PC-9 (cell line): ENCODE measurements at regions of chr17 and their contacts with region 1.

Region 1: DNA sequence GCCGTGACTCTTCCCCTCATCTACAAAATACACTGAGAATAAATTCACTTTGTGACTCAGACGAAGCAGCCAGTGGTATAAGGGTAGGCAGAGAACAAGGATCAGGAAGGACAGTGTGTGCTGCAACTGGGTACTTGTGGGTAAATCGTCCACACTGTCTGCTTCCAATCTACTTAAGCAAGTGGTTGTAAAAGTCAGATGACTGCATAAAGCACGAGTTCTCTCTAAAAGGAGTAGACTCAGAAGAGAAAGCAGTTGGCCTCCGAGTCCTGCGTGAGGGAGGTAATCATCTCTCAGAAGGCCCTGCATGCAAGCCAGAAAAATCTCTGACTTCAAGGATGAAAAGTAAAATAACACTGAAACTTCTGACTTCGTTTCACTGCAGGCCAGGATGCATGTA is 43.1 kb downstream of the ANKFY1 start:
- DNase-seq: no peak
- H3K4me3 ChIP-seq: no peak overlapping the region
- H3K27ac ChIP-seq: no peak overlapping the region
- H3K4me1 ChIP-seq: no peaks in the 10 kb centered on the region
- H3K27me3 ChIP-seq: no peaks in the 10 kb centered on the region
- CTCF ChIP-seq: no peak

Region 2: GRCh38 chr17:4074831-4075495 is 145.7 kb before region 1 on chr17:
- CTCF ChIA-PET with region 1: no interaction called
- POLR2A ChIA-PET with region 1: no interaction called
- intact Hi-C with region 1: no loop called
- DNase-seq: peak; percentile 16 to 50
- H3K4me3 ChIP-seq: no peak overlapping the region
- H3K27ac ChIP-seq: no peak overlapping the region
- H3K4me1 ChIP-seq: peaks cover 13% of the 10 kb centered on the region
- H3K27me3 ChIP-seq: no peaks in the 10 kb centered on the region
- CTCF ChIP-seq: peak; percentile 85

Region 3: GRCh38 chr17:4256952-4257351 is 36.3 kb after region 1 on chr17:
- CTCF ChIA-PET with region 1: no interaction called
- POLR2A ChIA-PET with region 1: interaction called, 11 read pairs
- intact Hi-C with region 1: loop called (anchors 5 kb)
- DNase-seq: no peak
- H3K4me3 ChIP-seq: no peak overlapping the region
- H3K27ac ChIP-seq: no peak overlapping the region
- H3K4me1 ChIP-seq: no peaks in the 10 kb centered on the region
- H3K27me3 ChIP-seq: no peaks in the 10 kb centered on the region
- CTCF ChIP-seq: no peak

Region 4: GRCh38 chr17:4263282-4264215 is 42.9 kb after region 1 on chr17 and contains the start of gene ANKFY1:
- CTCF ChIA-PET with region 1: interaction called, 6 read pairs
- POLR2A ChIA-PET with region 1: no interaction called
- intact Hi-C with region 1: loop called (anchors 5 kb)
- DNase-seq: peak; percentile 85 to 98
- H3K4me3 ChIP-seq: peak within 1 kb of the TSS; percentile 64
- H3K27ac ChIP-seq: peak within 1 kb of the TSS; percentile 46
- H3K4me1 ChIP-seq: peaks cover 14% of the 10 kb centered on the region
- H3K27me3 ChIP-seq: no peaks in the 10 kb centered on the region
- CTCF ChIP-seq: no peak
- total RNA-seq, gene ANKFY1: 63.9 and 74.5 TPM in 2 replicates

Region 5: GRCh38 chr17:4304417-4305027 is 83.9 kb after region 1 on chr17:
- CTCF ChIA-PET with region 1: interaction called, 13 read pairs
- POLR2A ChIA-PET with region 1: no interaction called
- intact Hi-C with region 1: no loop called
- DNase-seq: peak in 1 of 2 experiments; percentile 11
- H3K4me3 ChIP-seq: no peak overlapping the region
- H3K27ac ChIP-seq: no peak overlapping the region
- H3K4me1 ChIP-seq: no peaks in the 10 kb centered on the region
- H3K27me3 ChIP-seq: no peaks in the 10 kb centered on the region
- CTCF ChIP-seq: peak; percentile 84

Region 6: GRCh38 chr17:4366327-4367063 is 145.8 kb after region 1 on chr17 and contains the start of gene UBE2G1:
- CTCF ChIA-PET with region 1: interaction called, 3 read pairs
- POLR2A ChIA-PET with region 1: no interaction called
- intact Hi-C with region 1: loop called (anchors 2 kb)
- DNase-seq: peak; percentile 88 to 98
- H3K4me3 ChIP-seq: peak within 1 kb of the TSS; percentile 72
- H3K27ac ChIP-seq: peak within 1 kb of the TSS; percentile 60
- H3K4me1 ChIP-seq: peaks cover 17% of the 10 kb centered on the region
- H3K27me3 ChIP-seq: no peaks in the 10 kb centered on the region
- CTCF ChIP-seq: peak; percentile 41
- total RNA-seq, gene UBE2G1: 104 and 111 TPM in 2 replicates

Region 7: DNA sequence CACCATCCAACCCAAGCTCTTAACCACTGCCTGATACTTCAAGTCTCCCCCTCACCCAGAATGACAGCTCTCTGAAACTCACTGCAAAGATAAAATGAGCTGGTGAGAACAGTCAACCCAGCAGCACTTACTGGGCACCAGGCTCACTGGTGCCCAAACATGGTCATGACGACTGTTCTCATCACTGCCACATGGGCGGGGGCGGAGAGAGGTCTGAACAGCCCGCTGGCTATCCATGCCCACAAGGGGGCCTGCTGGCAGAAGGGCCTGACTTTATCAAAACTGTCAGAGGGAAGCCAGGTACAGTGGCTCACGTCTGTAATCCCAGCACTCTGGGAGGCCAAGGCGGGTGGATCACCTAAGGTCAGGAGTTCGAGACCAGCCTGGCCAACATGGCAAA is 330.5 kb after region 1 on chr17:
- CTCF ChIA-PET with region 1: no interaction called
- POLR2A ChIA-PET with region 1: no interaction called
- intact Hi-C with region 1: no loop called
- DNase-seq: no peak
- H3K4me3 ChIP-seq: no peak overlapping the region
- H3K27ac ChIP-seq: no peak overlapping the region
- H3K4me1 ChIP-seq: peaks cover 25% of the 10 kb centered on the region
- H3K27me3 ChIP-seq: no peaks in the 10 kb centered on the region
- CTCF ChIP-seq: no peak; the same call in 1 of the 2 replicates

Region 8: DNA sequence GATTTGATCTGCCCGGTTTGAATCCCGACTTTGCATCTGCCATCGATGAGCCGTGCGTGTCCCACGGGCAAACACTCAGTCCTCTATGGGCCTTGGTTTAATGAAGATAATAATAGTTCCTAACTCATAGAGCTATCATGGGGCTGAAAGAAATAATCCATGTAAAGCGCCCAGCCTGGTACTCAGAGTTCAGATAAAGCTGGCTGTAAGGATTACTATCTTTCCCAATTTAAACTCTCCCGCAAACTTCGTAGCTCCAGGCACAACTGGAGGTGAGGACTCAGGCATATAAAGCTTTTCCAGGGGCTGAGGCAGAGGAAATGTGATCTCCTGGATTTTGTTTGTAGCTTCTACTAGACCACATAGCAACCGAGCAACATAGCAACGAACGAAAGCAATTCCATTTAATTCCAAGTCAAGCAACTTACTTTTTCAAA is 404.5 kb after region 1 on chr17:
- CTCF ChIA-PET with region 1: interaction called, 3 read pairs
- POLR2A ChIA-PET with region 1: no interaction called
- intact Hi-C with region 1: loop called (anchors 10 kb)
- DNase-seq: no peak
- H3K4me3 ChIP-seq: no peak overlapping the region
- H3K27ac ChIP-seq: no peak overlapping the region
- H3K4me1 ChIP-seq: no peaks in the 10 kb centered on the region
- H3K27me3 ChIP-seq: peaks cover 9% of the 10 kb centered on the region; the same call in 1 of the 2 replicates
- CTCF ChIP-seq: no peak